PC-9 (cell line): ENCODE measurements at regions of chr10 and their contacts with region 1.

Region 1: GRCh38 chr10:122258136-122259074 is 12.7 kb upstream of the BTBD16 start:
- DNase-seq: no peak
- H3K4me3 ChIP-seq: no peak overlapping the region
- H3K27ac ChIP-seq: no peak overlapping the region
- H3K4me1 ChIP-seq: peaks cover under 1% of the 10 kb centered on the region
- H3K27me3 ChIP-seq: no peaks in the 10 kb centered on the region
- CTCF ChIP-seq: no peak

Region 2: DNA sequence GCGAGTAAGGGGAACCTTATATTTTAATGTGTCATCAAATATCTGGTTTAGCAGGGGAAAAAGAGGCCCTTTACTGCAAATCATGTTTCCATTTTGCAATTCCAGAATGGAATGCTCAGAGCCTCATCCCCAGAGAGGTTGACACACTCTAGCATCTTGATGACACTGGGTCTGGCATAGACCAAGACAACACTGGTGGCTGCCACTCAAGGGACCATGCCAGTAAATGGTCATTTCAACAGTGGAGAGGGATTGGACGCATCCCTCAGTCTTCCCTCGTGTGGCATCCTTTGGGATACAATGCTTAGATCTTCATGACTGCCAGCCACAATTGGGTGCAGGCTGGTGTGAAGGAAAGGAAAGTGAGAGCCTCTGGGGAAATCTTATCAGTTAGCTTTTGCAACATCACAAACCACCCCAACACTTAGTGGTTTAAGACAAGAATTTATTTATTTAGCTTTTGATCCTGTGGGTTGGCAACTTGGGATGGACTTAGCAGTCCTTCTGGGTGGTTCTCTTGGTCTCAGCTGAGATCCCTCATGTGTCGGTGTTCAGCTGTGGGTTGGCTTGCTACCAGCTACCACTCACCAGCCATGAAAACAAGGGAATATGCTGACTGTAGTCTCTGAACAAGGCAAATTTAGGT is 247.9 kb before region 1 on chr10:
- CTCF ChIA-PET with region 1: no interaction called
- POLR2A ChIA-PET with region 1: interaction called, 17 read pairs
- intact Hi-C with region 1: no loop called
- DNase-seq: no peak
- H3K4me3 ChIP-seq: no peak overlapping the region
- H3K27ac ChIP-seq: no peak overlapping the region
- H3K4me1 ChIP-seq: no peaks in the 10 kb centered on the region
- H3K27me3 ChIP-seq: no peaks in the 10 kb centered on the region
- CTCF ChIP-seq: no peak